A673 (cell line): ENCODE measurements at regions of chr19 and their contacts with region 1.

Region 1: GRCh38 chr19:48321622-48322591 is 3.4 kb upstream of the EMP3 start:
- DNase-seq: peak; percentile 99
- H3K4me3 ChIP-seq: peak overlapping the region; percentile 57
- H3K27ac ChIP-seq: peak overlapping the region; percentile 97
- H3K4me1 ChIP-seq: peaks cover 51% of the 10 kb centered on the region
- H3K27me3 ChIP-seq: no peaks in the 10 kb centered on the region
- CTCF ChIP-seq: no peak

Region 2: GRCh38 chr19:48398375-48399235 is 76.7 kb after region 1 on chr19:
- CTCF ChIA-PET with region 1: interaction called, 3 read pairs
- POLR2A ChIA-PET with region 1: no interaction called
- intact Hi-C with region 1: loop called (anchors 5 kb)
- DNase-seq: peak; percentile 93
- H3K4me3 ChIP-seq: peak overlapping the region; percentile 57
- H3K27ac ChIP-seq: peak overlapping the region; percentile 81
- H3K4me1 ChIP-seq: peaks cover 65% of the 10 kb centered on the region
- H3K27me3 ChIP-seq: no peaks in the 10 kb centered on the region
- CTCF ChIP-seq: no peak

Region 3: DNA sequence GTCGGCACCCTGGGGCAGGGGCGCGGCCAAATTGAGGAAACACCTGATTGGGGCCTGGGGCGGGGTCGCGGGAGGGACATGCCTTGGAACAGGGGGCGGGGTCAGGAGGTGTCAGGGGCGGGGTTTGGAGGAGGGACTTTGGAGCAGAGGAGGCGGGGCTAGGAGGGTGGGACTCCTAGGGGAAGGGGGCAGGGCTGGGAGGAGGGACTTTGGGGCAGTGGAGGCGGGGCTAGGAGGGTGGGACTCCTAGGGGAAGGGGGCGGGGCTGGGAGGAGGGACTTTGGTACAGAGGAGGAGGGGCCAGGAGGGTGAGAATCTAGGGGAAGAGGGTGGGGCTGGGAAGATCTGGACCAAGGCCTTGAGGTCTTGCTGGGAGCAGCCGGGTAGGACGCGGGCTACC is 93.5 kb after region 1 on chr19:
- CTCF ChIA-PET with region 1: no interaction called
- POLR2A ChIA-PET with region 1: no interaction called
- intact Hi-C with region 1: no loop called
- DNase-seq: peak; percentile 81
- H3K4me3 ChIP-seq: no peak overlapping the region
- H3K27ac ChIP-seq: no peak overlapping the region
- H3K4me1 ChIP-seq: peaks cover 5% of the 10 kb centered on the region
- H3K27me3 ChIP-seq: no peaks in the 10 kb centered on the region
- CTCF ChIP-seq: no peak